ENCODE measurements at regions of chr1 and their contacts with region 1.

Region 1: DNA sequence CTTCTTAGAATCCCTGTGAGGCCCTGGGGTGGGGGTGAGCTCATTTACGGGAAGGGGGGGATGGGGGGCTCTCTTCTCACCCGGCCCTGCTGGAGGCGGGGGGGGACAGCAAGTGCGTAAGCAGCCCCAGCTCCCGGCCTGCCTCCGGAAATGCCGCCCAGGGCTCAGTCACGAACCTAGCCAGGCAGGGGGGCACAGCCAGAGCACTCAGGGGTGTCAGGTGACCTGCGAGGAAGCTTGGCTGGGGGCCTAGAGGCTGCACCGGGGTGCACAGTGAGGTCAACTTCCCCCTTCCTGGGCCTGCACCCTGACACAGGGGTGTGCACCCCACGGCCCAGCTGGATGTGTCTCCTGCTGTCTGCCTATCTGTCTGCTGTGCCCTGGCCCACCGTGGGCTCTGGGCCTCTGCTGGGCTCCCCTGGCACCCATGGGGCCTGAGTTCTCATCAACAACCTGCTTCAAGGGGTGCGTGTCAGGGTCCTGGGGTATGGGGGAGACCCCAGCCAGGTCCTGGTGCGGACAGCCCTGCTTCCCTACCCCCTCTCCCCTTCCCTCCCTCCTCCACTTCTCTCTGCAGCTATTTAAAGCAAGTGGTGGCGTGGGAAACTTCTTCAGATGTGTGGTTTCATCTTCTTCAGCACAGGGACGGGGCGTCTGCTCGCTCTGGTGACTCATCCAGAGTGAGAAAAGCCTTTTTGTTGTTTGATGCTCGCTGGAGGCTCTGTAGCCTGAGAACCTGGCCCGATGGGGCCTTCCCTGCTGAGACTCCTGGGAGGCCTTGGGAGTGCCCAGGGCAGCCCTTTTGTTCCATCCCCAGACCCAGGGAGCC is 92.5 kb upstream of the RUNX3 start:
- DNase-seq: peak; percentile 82 to 99 (median 95)
- ATAC-seq: peak; percentile 84
- H3K4me3 ChIP-seq: peak overlapping the region; percentile 37
- H3K4me3 Mint-ChIP-seq: peak overlapping the region; percentile 61
- H3K27ac ChIP-seq: peak overlapping the region; percentile 97 to 99
- H3K27ac Mint-ChIP-seq: peak overlapping the region; percentile 91
- H3K4me1 ChIP-seq: peaks cover 98% of the 10 kb centered on the region
- H3K4me1 Mint-ChIP-seq: peaks cover 72% of the 10 kb centered on the region
- H3K27me3 ChIP-seq: no peaks in the 10 kb centered on the region
- H3K27me3 Mint-ChIP-seq: no peaks in the 10 kb centered on the region
- CTCF ChIP-seq: no peak

Region 2: GRCh38 chr1:24830680-24831272 is 191.8 kb before region 1 on chr1:
- CTCF ChIA-PET with region 1: no interaction called
- POLR2A ChIA-PET with region 1: no interaction called
- intact Hi-C with region 1: no loop called
- DNase-seq: peak in 3 of 14 experiments; percentile 65 to 75 (median 73)
- ATAC-seq: peak; percentile 44
- H3K4me3 ChIP-seq: no peak overlapping the region
- H3K4me3 Mint-ChIP-seq: no peak overlapping the region
- H3K27ac ChIP-seq: no peak overlapping the region
- H3K27ac Mint-ChIP-seq: no peak overlapping the region
- H3K4me1 ChIP-seq: no peaks in the 10 kb centered on the region
- H3K4me1 Mint-ChIP-seq: no peaks in the 10 kb centered on the region
- H3K27me3 ChIP-seq: no peaks in the 10 kb centered on the region
- H3K27me3 Mint-ChIP-seq: peaks cover 5% of the 10 kb centered on the region
- CTCF ChIP-seq: peak; percentile 91

Region 3: DNA sequence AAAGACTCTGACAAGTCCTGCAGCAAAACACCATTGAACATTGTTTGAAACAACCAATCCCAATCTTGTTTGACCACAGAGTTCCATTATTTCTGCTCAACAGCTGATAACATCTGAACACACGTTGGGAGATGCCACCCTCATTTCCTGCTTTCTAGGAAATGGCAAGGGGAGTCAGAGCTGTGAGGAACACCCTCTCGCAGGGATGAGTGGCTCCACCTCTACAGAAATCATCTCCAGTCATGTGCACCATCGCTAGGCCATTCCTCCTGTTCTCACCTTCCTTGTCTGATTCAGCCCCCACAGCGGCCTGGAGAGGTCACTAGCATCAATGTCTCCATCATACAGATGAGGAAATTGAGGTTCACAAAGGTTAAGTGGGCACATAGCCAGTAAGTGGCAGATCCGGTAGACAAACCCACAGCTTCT is 70.1 kb before region 1 on chr1:
- CTCF ChIA-PET with region 1: no interaction called
- POLR2A ChIA-PET with region 1: interaction called, 11 read pairs
- intact Hi-C with region 1: no loop called
- DNase-seq: peak in 5 of 14 experiments; percentile 34 to 77 (median 68)
- ATAC-seq: peak; percentile 17
- H3K4me3 ChIP-seq: no peak overlapping the region
- H3K4me3 Mint-ChIP-seq: peak overlapping the region; percentile 54
- H3K27ac ChIP-seq: no peak overlapping the region
- H3K27ac Mint-ChIP-seq: peak overlapping the region; percentile 19
- H3K4me1 ChIP-seq: peaks cover 54% of the 10 kb centered on the region
- H3K4me1 Mint-ChIP-seq: peaks cover 63% of the 10 kb centered on the region
- H3K27me3 ChIP-seq: no peaks in the 10 kb centered on the region
- H3K27me3 Mint-ChIP-seq: no peaks in the 10 kb centered on the region
- CTCF ChIP-seq: no peak

Region 4: GRCh38 chr1:24984800-24985522 is 37.6 kb before region 1 on chr1:
- CTCF ChIA-PET with region 1: no interaction called
- POLR2A ChIA-PET with region 1: interaction called, 39 read pairs
- intact Hi-C with region 1: loop called in 1 of 2 experiments (anchors 5 kb)
- DNase-seq: peak in 7 of 14 experiments; percentile 35 to 83 (median 57)
- ATAC-seq: peak; percentile 54
- H3K4me3 ChIP-seq: no peak overlapping the region
- H3K4me3 Mint-ChIP-seq: peak overlapping the region; percentile 6
- H3K27ac ChIP-seq: no peak overlapping the region
- H3K27ac Mint-ChIP-seq: peak overlapping the region; percentile 19
- H3K4me1 ChIP-seq: peaks cover 95% of the 10 kb centered on the region
- H3K4me1 Mint-ChIP-seq: peaks cover 93% of the 10 kb centered on the region
- H3K27me3 ChIP-seq: no peaks in the 10 kb centered on the region
- H3K27me3 Mint-ChIP-seq: no peaks in the 10 kb centered on the region
- CTCF ChIP-seq: no peak

Region 5: GRCh38 chr1:24990779-24991641 is 31.6 kb before region 1 on chr1:
- CTCF ChIA-PET with region 1: interaction called, 3 read pairs
- POLR2A ChIA-PET with region 1: interaction called, 39 read pairs
- intact Hi-C with region 1: loop called in 1 of 2 experiments (anchors 2 kb)
- DNase-seq: peak in 5 of 14 experiments; percentile 31 to 66 (median 39)
- ATAC-seq: peak; percentile 24
- H3K4me3 ChIP-seq: no peak overlapping the region
- H3K4me3 Mint-ChIP-seq: peak overlapping the region; percentile 18
- H3K27ac ChIP-seq: peak overlapping the region; percentile 79 to 87
- H3K27ac Mint-ChIP-seq: peak overlapping the region; percentile 93
- H3K4me1 ChIP-seq: peaks cover 99% of the 10 kb centered on the region
- H3K4me1 Mint-ChIP-seq: peaks cover 93% of the 10 kb centered on the region
- H3K27me3 ChIP-seq: no peaks in the 10 kb centered on the region
- H3K27me3 Mint-ChIP-seq: no peaks in the 10 kb centered on the region
- CTCF ChIP-seq: no peak

Region 6: GRCh38 chr1:24996983-24997893 is 25.3 kb before region 1 on chr1:
- CTCF ChIA-PET with region 1: interaction called, 3 read pairs
- POLR2A ChIA-PET with region 1: interaction called, 39 read pairs
- intact Hi-C with region 1: loop called in 1 of 2 experiments (anchors 2 kb)
- DNase-seq: peak in 3 of 14 experiments; percentile 25 to 63 (median 45)
- ATAC-seq: no peak
- H3K4me3 ChIP-seq: no peak overlapping the region
- H3K4me3 Mint-ChIP-seq: peak overlapping the region; percentile 22
- H3K27ac ChIP-seq: no peak overlapping the region
- H3K27ac Mint-ChIP-seq: peak overlapping the region; percentile 70
- H3K4me1 ChIP-seq: peaks cover 75% of the 10 kb centered on the region
- H3K4me1 Mint-ChIP-seq: peaks cover 82% of the 10 kb centered on the region
- H3K27me3 ChIP-seq: no peaks in the 10 kb centered on the region
- H3K27me3 Mint-ChIP-seq: no peaks in the 10 kb centered on the region
- CTCF ChIP-seq: no peak

Region 7: DNA sequence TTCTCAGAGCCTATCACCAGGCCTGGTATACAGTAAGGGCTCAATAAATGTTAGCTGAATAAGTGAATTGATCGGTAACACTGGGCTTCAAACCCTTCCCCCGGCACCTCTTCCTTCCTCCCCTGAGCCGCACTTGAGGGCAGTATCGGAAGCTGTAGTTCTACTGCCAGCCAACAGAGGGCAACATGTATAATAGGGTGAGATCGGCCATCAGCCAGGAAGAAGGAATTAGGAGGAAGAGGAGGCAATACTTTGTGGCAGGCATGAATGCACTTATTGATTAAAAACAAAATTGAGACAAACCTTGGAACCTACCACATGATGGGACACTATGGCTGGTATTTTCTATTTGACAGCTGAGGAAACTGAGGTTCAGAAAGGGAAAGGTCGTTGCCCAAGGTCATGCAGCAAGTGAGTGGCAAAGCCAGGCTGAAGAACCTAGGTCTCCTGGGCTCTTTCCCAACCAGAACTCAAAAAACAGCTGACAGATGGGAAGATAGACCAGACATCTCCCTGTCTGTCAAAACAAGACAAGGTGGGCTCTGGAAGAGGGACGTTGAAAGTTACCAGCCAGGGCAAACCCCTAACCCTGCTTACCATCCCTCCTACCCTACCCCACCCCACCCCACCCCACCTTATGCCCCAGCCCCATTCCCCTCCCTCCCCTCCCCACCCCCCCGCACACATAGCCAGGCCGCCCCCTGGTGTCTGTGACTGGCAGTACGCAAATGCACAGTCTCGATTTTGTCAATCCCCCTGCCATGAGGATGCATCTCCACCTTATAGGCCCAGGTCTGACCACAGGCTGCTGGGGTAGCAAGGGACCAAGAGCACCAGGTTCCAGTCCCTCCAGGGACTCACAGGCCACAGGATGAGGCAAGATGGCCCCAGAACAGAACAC is 14.8 kb after region 1 on chr1:
- CTCF ChIA-PET with region 1: interaction called, 35 read pairs
- POLR2A ChIA-PET with region 1: interaction called, 100 read pairs
- intact Hi-C with region 1: loop called (anchors 1 kb)
- DNase-seq: peak; percentile 52 to 84 (median 63)
- ATAC-seq: peak; percentile 77
- H3K4me3 ChIP-seq: no peak overlapping the region
- H3K4me3 Mint-ChIP-seq: peak overlapping the region; percentile 4
- H3K27ac ChIP-seq: no peak overlapping the region
- H3K27ac Mint-ChIP-seq: peak overlapping the region; percentile 28
- H3K4me1 ChIP-seq: peaks cover 56% of the 10 kb centered on the region
- H3K4me1 Mint-ChIP-seq: peaks cover 30% of the 10 kb centered on the region
- H3K27me3 ChIP-seq: no peaks in the 10 kb centered on the region
- H3K27me3 Mint-ChIP-seq: no peaks in the 10 kb centered on the region
- CTCF ChIP-seq: peak; percentile 72

Measured in CD4-positive, alpha-beta T cell (primary cell).